Cardiac septum (tissue), 1 donor: ENCODE measurements at regions of chr9 and their contacts with region 1.

Region 1: GRCh38 chr9:14096258-14096922 is 217.6 kb downstream of the NFIB start:
- DNase-seq: no peak

Region 2: GRCh38 chr9:14030375-14031059 is 65.9 kb before region 1 on chr9:
- intact Hi-C with region 1: loop called (anchors 5 kb)
- DNase-seq: no peak

Region 3: DNA sequence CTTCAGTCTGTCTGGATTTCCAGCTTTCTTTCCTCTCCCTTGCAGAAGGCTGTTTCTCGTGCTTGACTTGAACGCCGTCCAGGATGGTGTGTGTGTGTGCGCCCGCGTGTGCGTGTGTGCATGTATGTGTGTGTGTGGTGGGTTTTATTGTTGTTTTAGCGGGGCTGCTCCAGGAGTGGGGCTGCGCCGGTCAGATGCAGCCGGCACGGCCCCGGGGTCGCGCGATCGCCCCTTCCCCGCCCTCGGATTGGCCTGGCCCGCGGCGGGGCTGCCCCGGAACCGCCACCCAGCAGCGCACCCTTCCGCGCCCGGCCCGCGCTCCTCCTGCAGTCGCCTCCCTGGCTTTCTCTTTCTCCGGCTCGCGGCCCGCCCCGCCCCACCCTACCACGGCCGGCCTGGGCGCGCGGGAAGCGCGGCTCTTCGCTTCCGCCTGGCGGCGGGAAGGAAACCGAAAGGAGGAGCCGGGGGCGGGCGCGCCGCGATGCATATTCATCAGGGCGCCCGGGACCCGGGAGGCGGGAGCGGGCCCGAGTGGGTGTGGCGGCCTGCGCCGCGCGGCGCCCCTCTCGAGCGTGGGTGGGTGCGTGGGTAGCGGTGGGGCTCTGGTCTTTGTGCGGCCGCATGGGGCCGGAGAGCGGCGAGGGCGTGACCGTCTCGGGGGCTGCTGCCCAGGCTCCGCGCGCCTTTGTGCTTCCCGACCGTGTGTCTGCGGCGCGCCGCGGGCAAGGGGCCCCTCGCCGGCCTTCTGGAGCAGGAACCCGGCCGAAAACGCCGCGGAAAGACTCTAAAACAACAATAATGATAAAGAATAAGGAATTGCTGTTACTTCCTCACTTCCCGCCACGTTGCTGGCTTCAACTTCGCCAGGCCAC is 226.1 kb after region 1 on chr9:
- intact Hi-C with region 1: loop called (anchors 2 kb)
- DNase-seq: peak; percentile 94

Region 4: GRCh38 chr9:14347406-14348122 is 251.2 kb after region 1 on chr9:
- intact Hi-C with region 1: loop called (anchors 2 kb)
- DNase-seq: peak; percentile 78

Region 5: GRCh38 chr9:14366076-14366475 is 269.7 kb after region 1 on chr9:
- intact Hi-C with region 1: no loop called
- DNase-seq: no peak